Ovary (tissue), 10 donors: ENCODE measurements at regions of chr9 and their contacts with region 1.

Region 1: DNA sequence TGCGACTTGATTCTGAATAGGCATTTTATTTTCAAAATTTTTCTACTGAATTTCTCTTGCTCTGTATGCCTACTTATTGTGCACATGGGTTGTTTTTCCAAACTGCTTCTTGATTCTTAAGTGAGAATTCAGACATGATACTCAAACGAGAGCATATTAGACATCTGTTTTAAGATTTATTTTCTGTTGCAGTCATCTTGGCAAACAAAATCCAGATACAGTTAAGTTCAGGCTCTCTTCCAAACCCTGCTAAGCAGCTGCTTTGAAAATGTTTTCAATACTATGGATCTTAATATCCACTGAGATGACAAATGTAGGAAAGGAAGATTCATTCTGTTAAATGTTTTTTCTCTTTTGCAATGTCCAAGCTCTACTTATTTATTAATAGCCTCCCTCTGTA is 4.5 kb downstream of the TMEM215 start:
- DNase-seq: no peak
- H3K4me3 ChIP-seq: no peak overlapping the region
- H3K27ac ChIP-seq: no peak overlapping the region
- H3K4me1 ChIP-seq: peaks cover under 1% of the 10 kb centered on the region
- H3K27me3 ChIP-seq: no peaks in the 10 kb centered on the region
- CTCF ChIP-seq: no peak
- EP300 ChIP-seq: no peak
- POLR2A ChIP-seq: no peak

Region 2: GRCh38 chr9:32854271-32854670 is 66.5 kb after region 1 on chr9:
- intact Hi-C with region 1: loop called in 1 of 4 experiments (anchors 10 kb)
- DNase-seq: no peak
- H3K4me3 ChIP-seq: no peak overlapping the region
- H3K27ac ChIP-seq: no peak overlapping the region
- H3K4me1 ChIP-seq: no peaks in the 10 kb centered on the region
- H3K27me3 ChIP-seq: no peaks in the 10 kb centered on the region
- CTCF ChIP-seq: no peak
- EP300 ChIP-seq: no peak
- POLR2A ChIP-seq: no peak